ENCODE measurements at regions of chr15 and their contacts with region 1.

Region 1: DNA sequence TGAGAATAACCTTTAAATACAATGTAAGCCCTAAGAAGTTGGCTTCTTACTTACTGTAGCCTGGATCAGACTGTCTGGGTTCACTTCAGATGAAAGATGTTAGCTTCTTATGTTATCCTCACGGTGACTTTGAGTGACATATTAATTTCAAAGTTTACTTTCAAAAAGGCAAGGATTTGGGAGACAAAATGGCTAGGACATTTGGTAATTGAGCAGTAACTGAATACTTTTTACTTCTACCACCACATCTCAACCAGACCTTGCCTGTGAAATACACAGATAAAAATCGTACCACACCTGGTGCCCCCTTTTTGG is 36.0 kb upstream of the BNIP2 start:
- DNase-seq: no peak
- ATAC-seq: no peak
- H3K4me3 Mint-ChIP-seq: no peak overlapping the region
- H3K27ac Mint-ChIP-seq: no peak overlapping the region
- H3K4me1 Mint-ChIP-seq: peaks cover 3% of the 10 kb centered on the region
- H3K27me3 Mint-ChIP-seq: peaks cover 2% of the 10 kb centered on the region
- CTCF ChIP-seq: peak; percentile 15

Region 2: DNA sequence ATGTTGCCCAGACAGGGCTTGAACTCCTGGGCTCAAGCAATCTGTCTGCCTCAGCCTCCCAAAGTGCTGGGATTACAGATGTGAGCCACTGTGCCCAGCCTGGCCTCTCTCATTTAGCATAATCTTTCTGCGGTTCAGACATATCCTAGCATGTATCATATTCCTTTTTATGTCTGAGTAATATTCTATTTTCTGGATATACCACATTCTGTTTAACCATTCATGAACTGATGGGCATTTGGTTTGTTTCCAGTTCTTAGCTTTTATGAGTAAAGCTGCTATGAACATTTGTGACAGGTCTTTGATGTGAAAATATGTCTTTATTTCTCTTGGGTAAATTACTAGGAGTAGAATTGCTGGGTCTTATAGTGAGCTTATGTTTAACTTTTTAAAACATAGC is 263.6 kb before region 1 on chr15:
- CTCF ChIA-PET with region 1: no interaction called
- POLR2A ChIA-PET with region 1: no interaction called
- intact Hi-C with region 1: no loop called
- DNase-seq: no peak
- ATAC-seq: no peak
- H3K4me3 Mint-ChIP-seq: no peak overlapping the region
- H3K27ac Mint-ChIP-seq: no peak overlapping the region
- H3K4me1 Mint-ChIP-seq: no peaks in the 10 kb centered on the region
- H3K27me3 Mint-ChIP-seq: peaks cover 9% of the 10 kb centered on the region
- CTCF ChIP-seq: no peak

Region 3: DNA sequence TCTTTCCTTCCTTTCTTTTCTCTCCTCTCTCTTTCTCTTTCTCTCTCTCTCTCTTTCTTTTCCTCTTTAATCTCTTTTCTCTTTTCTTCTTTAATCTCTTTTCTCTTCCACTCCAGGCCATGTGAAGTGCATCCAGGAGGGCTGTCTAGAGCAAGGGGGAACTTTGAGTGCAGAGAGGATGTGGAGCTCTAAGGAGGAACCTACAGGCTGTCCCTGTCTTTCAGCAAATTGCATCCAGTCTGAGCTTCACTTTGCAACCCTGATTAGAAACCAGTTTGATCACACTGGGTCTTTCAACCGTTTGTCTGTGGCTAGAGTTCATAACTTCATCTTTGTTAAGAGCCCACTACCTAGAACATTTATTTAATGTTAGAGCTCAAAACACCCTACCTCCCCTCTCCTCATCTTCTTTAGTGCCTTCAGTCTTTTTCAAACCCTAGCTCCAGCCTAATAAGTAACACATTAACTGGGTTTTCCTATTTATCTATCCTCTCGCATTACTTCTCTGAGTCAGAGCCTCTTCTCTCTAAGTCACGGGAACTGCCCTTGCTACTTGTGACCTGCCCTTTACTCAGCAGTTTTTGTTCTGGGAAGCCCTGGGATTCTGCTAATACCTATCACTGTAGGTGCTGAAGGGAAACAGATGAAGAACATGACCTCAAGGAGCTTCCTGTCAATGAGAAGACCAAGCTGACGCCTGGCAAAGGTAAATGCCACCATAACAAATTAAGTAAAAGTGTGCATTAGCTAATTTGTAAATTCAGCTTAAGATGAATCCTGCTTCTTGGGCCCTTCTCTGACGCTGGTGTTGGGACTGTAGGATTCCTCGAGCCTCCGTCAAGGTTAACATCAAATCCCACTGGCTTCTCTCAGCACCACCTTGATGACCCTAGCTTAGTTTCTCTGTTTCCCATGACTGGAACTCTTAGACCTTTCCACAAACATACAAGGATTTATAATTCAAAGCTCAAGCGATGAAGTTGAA is 113.6 kb before region 1 on chr15 and contains the start of gene GCNT3:
- CTCF ChIA-PET with region 1: no interaction called
- POLR2A ChIA-PET with region 1: no interaction called
- intact Hi-C with region 1: no loop called
- DNase-seq: no peak
- ATAC-seq: no peak
- H3K4me3 Mint-ChIP-seq: no peak within 1 kb of the TSS
- H3K27ac Mint-ChIP-seq: no peak within 1 kb of the TSS
- H3K4me1 Mint-ChIP-seq: peaks cover 5% of the 10 kb centered on the region
- H3K27me3 Mint-ChIP-seq: peaks cover 6% of the 10 kb centered on the region
- CTCF ChIP-seq: no peak
- total RNA-seq, gene GCNT3: not detected

Region 4: DNA sequence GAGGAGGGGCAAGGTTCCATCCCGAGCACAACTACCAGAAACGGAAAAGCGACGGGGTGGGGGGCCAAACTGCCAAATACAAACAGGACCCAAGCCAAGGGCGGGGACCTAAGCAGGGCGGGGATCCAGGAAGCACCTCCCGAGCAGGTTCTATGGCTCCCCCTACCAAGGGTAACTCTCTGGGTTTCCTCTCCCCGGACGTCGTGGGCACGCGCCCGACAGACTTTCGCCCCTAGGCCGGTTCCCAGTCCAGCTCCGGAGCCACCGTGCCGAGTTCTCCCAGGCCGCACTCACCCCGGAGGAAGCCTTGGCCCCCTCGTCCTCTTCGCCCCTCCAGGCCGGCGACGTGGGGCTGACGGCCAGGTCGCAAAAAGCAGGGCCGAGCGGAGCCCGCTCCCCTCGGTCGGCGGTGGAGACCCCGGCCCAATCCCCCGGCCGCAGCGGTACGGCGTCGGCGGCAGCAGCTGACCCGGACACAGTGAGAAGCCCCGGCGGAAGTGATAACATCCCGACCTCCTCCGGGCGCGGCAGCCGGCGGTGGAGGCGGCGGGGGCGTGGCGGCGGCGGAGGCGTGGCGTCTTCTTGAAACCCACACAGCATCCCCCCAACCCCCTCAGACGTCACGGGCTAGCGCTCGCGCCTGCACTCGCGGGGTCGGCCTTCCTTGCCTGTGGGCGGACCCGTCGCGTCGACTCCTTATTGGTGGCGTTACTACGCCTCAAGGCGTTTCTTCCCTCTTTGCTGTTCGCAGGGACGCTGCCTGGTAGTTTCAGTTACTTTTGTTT is 36.1 kb before region 1 on chr15 and contains the start of gene BNIP2:
- CTCF ChIA-PET with region 1: interaction called, 11 read pairs
- POLR2A ChIA-PET with region 1: no interaction called
- intact Hi-C with region 1: no loop called
- DNase-seq: peak; percentile 99
- ATAC-seq: peak; percentile 90
- H3K4me3 Mint-ChIP-seq: peak within 1 kb of the TSS; percentile 85
- H3K27ac Mint-ChIP-seq: peak within 1 kb of the TSS; percentile 96
- H3K4me1 Mint-ChIP-seq: peaks cover 44% of the 10 kb centered on the region
- H3K27me3 Mint-ChIP-seq: no peaks in the 10 kb centered on the region
- CTCF ChIP-seq: no peak
- total RNA-seq, gene BNIP2: 52.2 to 53.2 TPM

Region 5: GRCh38 chr15:59741274-59741906 is 16.3 kb after region 1 on chr15:
- CTCF ChIA-PET with region 1: interaction called, 17 read pairs
- POLR2A ChIA-PET with region 1: no interaction called
- intact Hi-C with region 1: no loop called
- DNase-seq: no peak
- ATAC-seq: no peak
- H3K4me3 Mint-ChIP-seq: no peak overlapping the region
- H3K27ac Mint-ChIP-seq: no peak overlapping the region
- H3K4me1 Mint-ChIP-seq: no peaks in the 10 kb centered on the region
- H3K27me3 Mint-ChIP-seq: no peaks in the 10 kb centered on the region
- CTCF ChIP-seq: no peak

Region 6: GRCh38 chr15:59751552-59752413 is 26.7 kb after region 1 on chr15:
- CTCF ChIA-PET with region 1: interaction called, 15 read pairs
- POLR2A ChIA-PET with region 1: no interaction called
- intact Hi-C with region 1: no loop called
- DNase-seq: no peak
- ATAC-seq: peak; percentile 91
- H3K4me3 Mint-ChIP-seq: no peak overlapping the region
- H3K27ac Mint-ChIP-seq: no peak overlapping the region
- H3K4me1 Mint-ChIP-seq: peaks cover 7% of the 10 kb centered on the region
- H3K27me3 Mint-ChIP-seq: peaks cover 2% of the 10 kb centered on the region
- CTCF ChIP-seq: peak; percentile 68

Region 7: DNA sequence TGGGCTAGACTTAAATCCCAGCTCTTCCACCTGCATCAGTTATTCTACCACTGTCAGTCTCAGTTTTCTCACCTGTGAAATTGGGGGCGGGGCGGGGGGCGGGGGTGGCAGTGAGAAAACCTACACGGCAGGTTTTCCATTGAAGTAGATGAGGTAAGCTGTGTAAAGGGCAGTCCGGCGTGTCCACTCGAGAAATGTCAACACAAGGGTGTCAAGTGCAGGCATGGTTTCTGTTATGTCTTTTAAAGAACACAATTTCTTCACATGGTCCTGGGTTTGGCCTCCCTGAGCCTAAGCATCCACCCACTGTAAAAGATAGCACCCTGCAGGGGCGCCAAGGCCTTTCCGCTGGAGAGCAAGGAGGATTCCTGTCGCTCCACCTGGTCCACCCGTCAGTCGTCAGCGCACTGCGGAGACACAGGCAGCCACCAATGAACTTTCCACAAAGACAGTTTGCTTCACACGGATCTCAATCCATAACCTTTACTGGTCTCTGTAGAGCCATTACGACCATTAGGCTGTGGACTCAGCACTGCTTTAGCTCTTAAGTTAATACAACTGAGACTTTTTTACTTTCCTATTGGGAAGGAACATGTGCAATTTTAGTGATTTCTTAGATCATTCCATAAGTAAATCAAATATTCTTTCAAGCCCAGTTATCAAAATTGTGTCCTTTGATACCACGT is 179.5 kb after region 1 on chr15:
- CTCF ChIA-PET with region 1: no interaction called
- POLR2A ChIA-PET with region 1: no interaction called
- intact Hi-C with region 1: loop called (anchors 10 kb)
- DNase-seq: no peak
- ATAC-seq: no peak
- H3K4me3 Mint-ChIP-seq: no peak overlapping the region
- H3K27ac Mint-ChIP-seq: no peak overlapping the region
- H3K4me1 Mint-ChIP-seq: peaks cover 5% of the 10 kb centered on the region
- H3K27me3 Mint-ChIP-seq: peaks cover 17% of the 10 kb centered on the region
- CTCF ChIP-seq: no peak